ENCODE measurements at regions of chr16 and their contacts with region 1.

Region 1: GRCh38 chr16:30805370-30806169 is 18.6 kb upstream of the ZNF629 start:
- DNase-seq: no peak
- H3K4me3 ChIP-seq: peak overlapping the region; percentile 79
- H3K27me3 ChIP-seq: no peaks in the 10 kb centered on the region
- CTCF ChIP-seq: no peak

Region 2: DNA sequence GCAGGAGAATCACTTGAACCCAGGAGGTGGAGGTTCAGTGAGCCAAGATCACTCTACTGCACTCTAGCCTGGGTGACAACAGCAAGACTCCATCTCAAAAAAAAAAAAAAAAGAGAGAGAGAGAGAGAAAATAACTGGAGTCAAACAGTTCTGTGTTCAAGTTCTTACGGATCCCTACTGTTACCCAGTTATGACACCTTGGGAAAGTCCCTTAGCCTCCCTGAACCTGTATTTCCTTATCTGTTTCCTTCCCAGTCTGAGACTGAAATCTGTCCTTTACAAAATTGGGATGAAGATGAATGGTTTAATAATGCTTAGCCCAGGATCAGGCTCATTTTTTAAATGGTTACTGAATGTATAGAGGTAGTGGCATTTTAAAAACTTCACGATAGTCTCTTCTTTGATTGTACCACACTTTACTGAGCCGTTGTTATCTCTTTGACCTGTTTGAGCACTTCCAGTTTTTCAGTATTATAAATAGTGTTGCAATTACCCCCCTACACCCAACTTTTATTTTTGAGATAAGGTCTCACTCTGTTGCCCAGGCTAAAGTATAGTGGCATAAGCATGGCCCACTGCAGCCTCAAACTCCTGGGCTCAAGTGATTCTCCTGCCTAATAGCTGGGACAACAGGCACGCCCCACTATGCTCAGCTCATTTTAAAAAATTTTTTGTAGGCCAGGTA is 296.3 kb before region 1 on chr16:
- CTCF ChIA-PET with region 1: no interaction called
- POLR2A ChIA-PET with region 1: no interaction called
- DNase-seq: no peak
- H3K4me3 ChIP-seq: no peak overlapping the region
- H3K27me3 ChIP-seq: peaks cover 1% of the 10 kb centered on the region
- CTCF ChIP-seq: no peak

Region 3: GRCh38 chr16:30740364-30741251 is 65.0 kb before region 1 on chr16:
- CTCF ChIA-PET with region 1: no interaction called
- POLR2A ChIA-PET with region 1: interaction called, 20 read pairs
- DNase-seq: peak; percentile 22
- H3K4me3 ChIP-seq: no peak overlapping the region
- H3K27me3 ChIP-seq: no peaks in the 10 kb centered on the region
- CTCF ChIP-seq: no peak

Region 4: GRCh38 chr16:30786936-30787612 is 18.5 kb before region 1 on chr16 and contains the start of gene ZNF629:
- CTCF ChIA-PET with region 1: interaction called, 21 read pairs
- POLR2A ChIA-PET with region 1: interaction called, 10 read pairs
- DNase-seq: no peak
- H3K4me3 ChIP-seq: peak within 1 kb of the TSS; percentile 63
- H3K27me3 ChIP-seq: no peaks in the 10 kb centered on the region
- CTCF ChIP-seq: no peak
- polyA plus RNA-seq, gene ZNF629: 4.6 and 6.0 TPM in 2 replicates

Region 5: GRCh38 chr16:31117391-31118197 is 312.0 kb after region 1 on chr16 and contains the start of gene KAT8:
- CTCF ChIA-PET with region 1: no interaction called
- POLR2A ChIA-PET with region 1: interaction called, 12 read pairs
- DNase-seq: peak; percentile 83
- H3K4me3 ChIP-seq: peak within 1 kb of the TSS; percentile 77
- H3K27me3 ChIP-seq: no peaks in the 10 kb centered on the region
- CTCF ChIP-seq: no peak
- polyA plus RNA-seq, gene KAT8: 28.9 and 31.9 TPM in 2 replicates

Measured in BJ (cell line).